BJ (cell line): ENCODE measurements at regions of chr10 and their contacts with region 1.

Region 1: DNA sequence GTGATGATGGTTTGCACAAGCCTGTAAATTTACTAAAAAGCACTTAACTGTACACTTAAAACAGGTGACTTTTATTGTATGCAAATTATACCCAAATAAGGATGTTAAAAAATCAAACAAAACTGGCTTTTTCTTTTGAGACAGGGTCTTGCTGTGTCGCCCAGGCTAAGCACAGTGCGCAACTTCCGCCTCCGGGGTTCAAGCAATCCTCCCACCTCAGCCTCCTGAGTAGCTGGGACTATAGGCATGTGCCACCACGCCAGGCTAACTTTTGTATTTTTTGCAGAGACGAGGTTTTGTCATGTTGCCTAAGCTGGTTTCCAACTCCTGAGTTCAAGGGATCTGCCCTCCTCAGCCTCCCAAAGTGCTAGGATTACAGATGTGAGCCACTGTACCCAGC is 77.7 kb downstream of the DNAJC1 start:
- DNase-seq: no peak
- H3K4me3 ChIP-seq: no peak overlapping the region
- H3K27me3 ChIP-seq: no peaks in the 10 kb centered on the region
- CTCF ChIP-seq: no peak

Region 2: DNA sequence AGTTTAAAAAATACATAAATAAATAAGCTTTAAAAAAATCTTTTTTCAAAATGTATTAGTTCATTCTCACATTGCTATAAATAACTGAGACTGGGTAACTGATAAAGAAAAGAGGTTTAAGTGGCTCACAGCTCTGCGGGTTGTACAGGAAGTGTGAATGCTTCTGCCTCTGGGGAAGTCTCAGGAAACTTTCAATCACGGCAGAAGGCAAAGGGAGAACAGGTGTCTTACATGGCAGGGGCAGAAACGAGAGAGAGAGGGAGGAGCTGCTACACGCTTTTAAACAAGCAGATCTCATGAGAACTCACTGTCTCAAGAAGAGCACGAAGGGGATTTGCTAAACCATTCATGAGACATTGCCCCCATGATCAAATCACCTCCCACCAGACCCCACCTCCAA is 36.9 kb before region 1 on chr10:
- CTCF ChIA-PET with region 1: no interaction called
- POLR2A ChIA-PET with region 1: no interaction called
- DNase-seq: no peak
- H3K4me3 ChIP-seq: no peak overlapping the region
- H3K27me3 ChIP-seq: no peaks in the 10 kb centered on the region
- CTCF ChIP-seq: no peak

Region 3: DNA sequence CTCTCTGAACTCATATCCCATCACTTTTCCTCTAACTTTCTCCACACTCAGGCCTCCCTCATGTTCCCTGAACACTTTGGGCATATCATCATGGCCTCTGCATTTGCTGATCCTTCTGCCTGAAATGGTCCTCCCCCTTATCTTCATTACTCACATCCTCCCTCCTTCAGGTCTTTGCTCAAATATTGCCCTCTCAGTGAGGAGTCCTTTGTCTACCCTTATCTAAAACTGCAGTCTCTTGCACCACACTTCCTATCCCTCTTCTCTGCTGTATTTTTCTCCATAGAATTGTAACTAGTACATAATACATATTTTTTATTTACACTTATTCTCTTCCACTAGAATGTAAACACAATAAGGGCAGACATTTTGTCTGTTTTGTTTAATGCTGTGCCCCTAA is 36.0 kb after region 1 on chr10:
- CTCF ChIA-PET with region 1: no interaction called
- POLR2A ChIA-PET with region 1: interaction called, 14 read pairs
- DNase-seq: no peak
- H3K4me3 ChIP-seq: no peak overlapping the region
- H3K27me3 ChIP-seq: no peaks in the 10 kb centered on the region
- CTCF ChIP-seq: no peak